Prostate gland (tissue), 2 donors: ENCODE measurements at regions of chr9 and their contacts with region 1.

Region 1: GRCh38 chr9:72577212-72577753 is 55.9 kb downstream of the TMC1 start:
- DNase-seq: peak; percentile 60
- H3K4me3 ChIP-seq: peak overlapping the region in 1 of 2 donors; percentile 11
- H3K27ac ChIP-seq: peak overlapping the region; percentile 64 to 71
- H3K4me1 ChIP-seq: peaks cover 3% of the 10 kb centered on the region
- H3K27me3 ChIP-seq: no peaks in the 10 kb centered on the region
- CTCF ChIP-seq: no peak
- POLR2A ChIP-seq: no peak

Region 2: GRCh38 chr9:72292256-72292682 is 285.0 kb before region 1 on chr9:
- intact Hi-C with region 1: no loop called
- DNase-seq: no peak
- H3K4me3 ChIP-seq: no peak overlapping the region
- H3K27ac ChIP-seq: no peak overlapping the region
- H3K4me1 ChIP-seq: no peaks in the 10 kb centered on the region
- H3K27me3 ChIP-seq: no peaks in the 10 kb centered on the region
- CTCF ChIP-seq: peak in 3 of 4 experiments; percentile 69 to 81 (median 70)
- POLR2A ChIP-seq: no peak

Region 3: GRCh38 chr9:72454871-72455491 is 122.3 kb before region 1 on chr9:
- intact Hi-C with region 1: loop called (anchors 5 kb)
- DNase-seq: peak; percentile 63
- H3K4me3 ChIP-seq: no peak overlapping the region
- H3K27ac ChIP-seq: no peak overlapping the region
- H3K4me1 ChIP-seq: no peaks in the 10 kb centered on the region
- H3K27me3 ChIP-seq: no peaks in the 10 kb centered on the region
- CTCF ChIP-seq: no peak
- POLR2A ChIP-seq: no peak